ENCODE measurements at regions of chr10 and their contacts with region 1.

Region 1: GRCh38 chr10:17847585-17848296 is 38.6 kb downstream of the MRC1 start:
- DNase-seq: no peak
- H3K4me3 ChIP-seq: no peak overlapping the region
- H3K27ac ChIP-seq: no peak overlapping the region
- H3K4me1 ChIP-seq: no peaks in the 10 kb centered on the region
- H3K27me3 ChIP-seq: no peaks in the 10 kb centered on the region
- CTCF ChIP-seq: peak; percentile 18 to 40

Region 2: GRCh38 chr10:17257466-17258321 is 590.0 kb before region 1 on chr10:
- CTCF ChIA-PET with region 1: no interaction called
- dilution Hi-C with region 1: no loop called
- in situ Hi-C with region 1: no loop called
- intact Hi-C with region 1: no loop called
- DNase-seq: peak; percentile 58
- H3K4me3 ChIP-seq: no peak overlapping the region
- H3K27ac ChIP-seq: no peak overlapping the region
- H3K4me1 ChIP-seq: no peaks in the 10 kb centered on the region
- H3K27me3 ChIP-seq: no peaks in the 10 kb centered on the region
- CTCF ChIP-seq: peak; percentile 83 to 86

Region 3: GRCh38 chr10:17607603-17608332 is 240.0 kb before region 1 on chr10:
- CTCF ChIA-PET with region 1: no interaction called
- dilution Hi-C with region 1: no loop called
- in situ Hi-C with region 1: loop called in 1 of 2 experiments (anchors 25 kb)
- intact Hi-C with region 1: loop called (anchors 5 kb)
- DNase-seq: peak; percentile 28
- H3K4me3 ChIP-seq: no peak overlapping the region
- H3K27ac ChIP-seq: no peak overlapping the region
- H3K4me1 ChIP-seq: no peaks in the 10 kb centered on the region
- H3K27me3 ChIP-seq: no peaks in the 10 kb centered on the region
- CTCF ChIP-seq: peak; percentile 84 to 90

Region 4: GRCh38 chr10:17703706-17704105 is 144.0 kb before region 1 on chr10:
- CTCF ChIA-PET with region 1: no interaction called
- dilution Hi-C with region 1: no loop called
- in situ Hi-C with region 1: no loop called
- intact Hi-C with region 1: no loop called
- DNase-seq: no peak
- H3K4me3 ChIP-seq: no peak overlapping the region
- H3K27ac ChIP-seq: no peak overlapping the region
- H3K4me1 ChIP-seq: no peaks in the 10 kb centered on the region
- H3K27me3 ChIP-seq: no peaks in the 10 kb centered on the region
- CTCF ChIP-seq: no peak

Region 5: GRCh38 chr10:17782921-17783665 is 64.6 kb before region 1 on chr10:
- CTCF ChIA-PET with region 1: no interaction called
- dilution Hi-C with region 1: loop called (anchors 5 kb)
- in situ Hi-C with region 1: no loop called
- intact Hi-C with region 1: no loop called
- DNase-seq: peak; percentile 52
- H3K4me3 ChIP-seq: no peak overlapping the region
- H3K27ac ChIP-seq: peak overlapping the region; percentile 63
- H3K4me1 ChIP-seq: peaks cover 35% of the 10 kb centered on the region
- H3K27me3 ChIP-seq: no peaks in the 10 kb centered on the region
- CTCF ChIP-seq: no peak

Region 6: DNA sequence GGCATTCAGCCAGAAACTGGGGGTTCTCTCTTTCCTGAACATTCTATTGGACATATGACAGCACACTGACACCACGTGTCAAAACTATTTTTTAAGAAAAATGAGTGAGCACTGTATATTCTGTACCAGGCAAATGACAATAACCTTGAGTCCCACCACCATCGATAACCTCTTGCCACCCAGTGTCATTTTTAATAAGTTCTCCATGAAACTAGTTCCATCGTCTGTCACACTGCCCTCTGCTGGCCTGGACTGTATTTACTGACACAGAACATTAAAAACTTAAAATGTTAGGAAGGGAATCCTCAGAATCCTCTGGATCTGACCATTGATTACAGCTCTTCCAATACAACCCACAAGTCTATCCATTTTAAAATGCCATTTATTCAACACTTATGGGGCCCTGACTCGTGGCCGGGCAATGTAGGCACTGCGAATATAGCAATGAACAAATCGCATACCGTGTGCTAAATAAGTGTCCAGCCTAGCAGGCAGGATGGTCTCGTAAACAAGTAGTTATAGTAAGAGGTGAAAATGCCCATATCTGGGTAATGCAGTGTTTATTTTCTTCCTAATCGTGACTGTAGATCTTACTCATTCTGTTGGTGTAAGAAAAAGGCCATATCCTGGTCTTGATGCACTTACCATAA is 256.6 kb after region 1 on chr10:
- CTCF ChIA-PET with region 1: no interaction called
- dilution Hi-C with region 1: no loop called
- in situ Hi-C with region 1: no loop called
- intact Hi-C with region 1: loop called (anchors 2 kb)
- DNase-seq: peak; percentile 8
- H3K4me3 ChIP-seq: no peak overlapping the region
- H3K27ac ChIP-seq: no peak overlapping the region
- H3K4me1 ChIP-seq: no peaks in the 10 kb centered on the region
- H3K27me3 ChIP-seq: no peaks in the 10 kb centered on the region
- CTCF ChIP-seq: peak; percentile 49 to 59

Region 7: DNA sequence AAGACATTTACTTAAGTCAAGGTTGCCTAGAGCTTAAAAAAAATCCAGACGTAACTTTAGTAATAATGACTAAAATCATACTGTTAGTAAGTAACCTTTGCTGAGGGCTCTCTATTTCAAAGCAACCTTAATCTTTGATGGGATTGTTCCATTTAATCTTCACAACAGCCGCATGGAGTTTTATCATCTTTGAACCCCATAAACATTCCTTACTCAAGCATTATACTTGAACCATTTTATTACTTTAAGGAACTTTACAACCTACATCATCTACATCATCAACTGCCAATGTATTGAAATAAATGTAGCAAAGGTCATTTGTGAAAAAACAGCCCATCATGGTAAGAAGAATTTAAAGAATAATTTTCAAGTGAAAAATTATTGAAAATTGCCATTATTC is 269.5 kb after region 1 on chr10:
- CTCF ChIA-PET with region 1: no interaction called
- dilution Hi-C with region 1: no loop called
- in situ Hi-C with region 1: no loop called
- intact Hi-C with region 1: no loop called
- DNase-seq: no peak
- H3K4me3 ChIP-seq: no peak overlapping the region
- H3K27ac ChIP-seq: no peak overlapping the region
- H3K4me1 ChIP-seq: no peaks in the 10 kb centered on the region
- H3K27me3 ChIP-seq: no peaks in the 10 kb centered on the region
- CTCF ChIP-seq: no peak

Region 8: DNA sequence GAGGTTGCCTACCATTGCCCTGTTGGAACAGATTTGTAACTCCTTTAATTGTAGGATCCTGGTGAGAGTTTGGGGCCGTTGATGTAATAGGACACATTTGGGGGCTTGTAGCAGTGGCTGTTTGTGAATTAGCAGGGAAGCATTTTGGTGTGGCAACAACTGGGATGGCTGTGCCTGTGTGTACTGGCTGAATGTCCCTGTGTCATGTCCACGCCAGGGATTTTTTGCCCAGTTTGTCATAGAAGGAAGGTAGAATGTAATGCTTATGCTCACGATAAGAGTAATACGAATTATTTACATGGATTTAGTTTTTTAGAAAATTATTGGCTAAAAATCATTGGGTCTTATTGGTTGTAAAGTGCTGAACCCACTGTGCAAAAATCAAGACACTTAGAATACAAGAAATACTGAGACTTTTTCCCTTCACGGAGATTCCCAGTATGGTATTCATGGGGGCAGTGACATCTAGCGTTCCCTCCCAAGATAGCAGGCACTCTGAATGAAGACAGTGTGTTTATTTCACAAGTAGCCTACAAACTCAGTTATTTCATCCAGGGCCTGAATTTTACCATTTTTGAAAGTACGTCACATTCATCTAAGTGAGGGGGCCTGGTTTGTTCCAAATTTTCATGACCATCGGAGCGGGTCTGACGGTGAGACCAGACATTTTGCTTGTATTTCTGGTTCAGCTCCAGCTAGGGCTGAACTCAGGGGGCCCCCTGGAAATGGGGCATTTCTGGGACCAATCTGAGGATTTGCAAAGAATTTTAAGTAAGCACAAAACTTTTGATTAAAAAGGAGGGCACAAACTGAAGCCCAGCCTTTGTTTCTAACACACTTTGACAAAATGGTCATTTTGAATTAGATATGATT is 367.2 kb after region 1 on chr10:
- CTCF ChIA-PET with region 1: interaction called, 4 read pairs
- dilution Hi-C with region 1: no loop called
- in situ Hi-C with region 1: loop called in 1 of 2 experiments (anchors 25 kb)
- intact Hi-C with region 1: loop called (anchors 1 kb)
- DNase-seq: peak; percentile 17
- H3K4me3 ChIP-seq: no peak overlapping the region
- H3K27ac ChIP-seq: no peak overlapping the region
- H3K4me1 ChIP-seq: no peaks in the 10 kb centered on the region
- H3K27me3 ChIP-seq: no peaks in the 10 kb centered on the region
- CTCF ChIP-seq: peak; percentile 41 to 79

Region 9: DNA sequence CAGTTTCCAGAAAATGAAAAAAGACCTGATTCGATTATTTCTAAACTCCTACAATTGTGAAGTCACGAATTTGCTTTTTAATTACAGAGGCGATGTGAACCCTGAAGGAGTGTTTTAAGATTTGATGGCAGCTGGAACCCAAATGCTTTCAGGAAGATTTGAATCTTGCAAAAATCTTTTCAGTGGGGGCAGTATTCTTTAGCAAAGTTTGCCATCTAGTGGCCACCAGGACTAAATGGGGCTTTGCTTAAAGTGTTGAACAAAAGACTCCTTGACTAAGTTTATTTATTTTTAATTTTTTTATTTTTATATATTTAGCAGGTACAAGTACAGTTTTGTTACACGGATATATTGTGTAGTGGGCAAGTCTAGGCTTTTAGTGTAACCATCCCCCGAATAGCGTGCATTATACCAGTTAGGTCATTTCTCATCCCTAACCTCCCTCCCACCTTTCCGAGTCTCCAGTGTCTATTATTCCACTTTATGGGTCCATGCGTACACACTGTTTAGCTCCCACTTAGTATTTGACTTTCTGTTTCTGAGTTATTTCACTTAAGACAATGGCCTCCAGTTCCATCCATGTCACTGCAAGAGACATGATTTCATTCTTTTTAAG is 391.2 kb after region 1 on chr10:
- CTCF ChIA-PET with region 1: no interaction called
- dilution Hi-C with region 1: no loop called
- in situ Hi-C with region 1: no loop called
- intact Hi-C with region 1: loop called (anchors 2 kb)
- DNase-seq: peak; percentile 20
- H3K4me3 ChIP-seq: no peak overlapping the region
- H3K27ac ChIP-seq: no peak overlapping the region
- H3K4me1 ChIP-seq: no peaks in the 10 kb centered on the region
- H3K27me3 ChIP-seq: no peaks in the 10 kb centered on the region
- CTCF ChIP-seq: peak; percentile 51 to 60

Region 10: GRCh38 chr10:18293536-18294510 is 446.1 kb after region 1 on chr10:
- CTCF ChIA-PET with region 1: no interaction called
- dilution Hi-C with region 1: no loop called
- in situ Hi-C with region 1: no loop called
- intact Hi-C with region 1: no loop called
- DNase-seq: no peak
- H3K4me3 ChIP-seq: no peak overlapping the region
- H3K27ac ChIP-seq: no peak overlapping the region
- H3K4me1 ChIP-seq: no peaks in the 10 kb centered on the region
- H3K27me3 ChIP-seq: no peaks in the 10 kb centered on the region
- CTCF ChIP-seq: no peak